ENCODE measurements at regions of chr17 and their contacts with region 1.

Region 1: DNA sequence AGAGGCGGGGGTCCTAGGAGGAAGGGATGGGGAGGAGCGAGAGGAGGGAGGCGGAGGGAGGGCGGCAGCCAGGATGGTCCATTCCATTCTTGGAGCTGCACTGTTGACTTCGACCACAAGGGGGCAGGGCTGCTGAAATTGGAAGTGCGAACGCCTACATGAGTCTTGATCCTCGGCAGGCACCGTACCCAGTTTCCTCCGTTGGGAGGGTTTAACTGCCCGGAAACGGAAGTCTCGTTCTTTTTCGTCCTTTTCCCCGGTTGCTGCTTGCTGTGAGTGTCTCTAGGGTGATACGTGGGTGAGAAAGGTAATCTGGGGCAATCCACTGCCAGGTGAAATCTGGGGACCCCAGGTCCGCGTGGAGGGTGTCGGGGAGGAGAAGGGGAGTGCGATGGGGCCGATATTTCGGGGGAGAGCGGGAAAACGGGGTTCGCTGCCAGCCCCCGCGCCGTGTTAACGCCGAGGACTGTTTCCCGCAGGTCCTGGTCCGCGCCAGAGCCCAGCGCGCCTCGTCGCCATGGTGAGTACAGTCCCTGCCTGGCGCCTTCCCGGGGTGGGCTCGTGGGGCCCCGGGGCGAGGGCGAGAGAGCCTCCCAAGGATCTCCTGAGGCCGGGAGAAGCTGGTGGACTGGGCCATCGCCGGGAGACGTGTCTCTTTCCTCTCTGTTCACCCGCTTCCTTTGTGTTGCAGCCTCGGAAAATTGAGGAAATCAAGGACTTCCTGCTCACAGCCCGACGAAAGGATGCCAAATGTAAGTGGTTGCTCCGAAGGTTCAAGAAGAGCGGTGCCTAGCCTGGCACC is at the start of gene RPL38:
- DNase-seq: peak; percentile 93 to 96 (median 95)
- H3K4me3 ChIP-seq: peak within 1 kb of the TSS; percentile 82 to 85 (median 84)
- H3K4me3 Mint-ChIP-seq: peak within 1 kb of the TSS; percentile 99
- H3K27ac ChIP-seq: peak within 1 kb of the TSS; percentile 76 to 90
- H3K27ac Mint-ChIP-seq: peak within 1 kb of the TSS; percentile 89 to 98 (median 94)
- H3K4me1 ChIP-seq: peaks cover 20 to 23% of the 10 kb centered on the region in 2 donors
- H3K4me1 Mint-ChIP-seq: peaks cover 42% of the 10 kb centered on the region
- H3K27me3 ChIP-seq: peaks cover 0 to 14% of the 10 kb centered on the region in 2 donors
- H3K27me3 Mint-ChIP-seq: peaks cover 5 to 29% (median 18%) of the 10 kb centered on the region in 3 donors
- CTCF ChIP-seq: peak; percentile 90
- polyA plus RNA-seq, gene RPL38: 379 to 1,070 (median 919) TPM

Region 2: GRCh38 chr17:74152591-74153455 is 50.8 kb before region 1 on chr17:
- intact Hi-C with region 1: no loop called
- DNase-seq: no peak
- H3K4me3 ChIP-seq: no peak overlapping the region
- H3K4me3 Mint-ChIP-seq: no peak overlapping the region
- H3K27ac ChIP-seq: no peak overlapping the region
- H3K27ac Mint-ChIP-seq: no peak overlapping the region
- H3K4me1 ChIP-seq: no peaks in the 10 kb centered on the region
- H3K4me1 Mint-ChIP-seq: no peaks in the 10 kb centered on the region
- H3K27me3 ChIP-seq: no peaks in the 10 kb centered on the region
- H3K27me3 Mint-ChIP-seq: peaks cover 14 to 22% (median 17%) of the 10 kb centered on the region in 3 donors
- CTCF ChIP-seq: no peak

Region 3: DNA sequence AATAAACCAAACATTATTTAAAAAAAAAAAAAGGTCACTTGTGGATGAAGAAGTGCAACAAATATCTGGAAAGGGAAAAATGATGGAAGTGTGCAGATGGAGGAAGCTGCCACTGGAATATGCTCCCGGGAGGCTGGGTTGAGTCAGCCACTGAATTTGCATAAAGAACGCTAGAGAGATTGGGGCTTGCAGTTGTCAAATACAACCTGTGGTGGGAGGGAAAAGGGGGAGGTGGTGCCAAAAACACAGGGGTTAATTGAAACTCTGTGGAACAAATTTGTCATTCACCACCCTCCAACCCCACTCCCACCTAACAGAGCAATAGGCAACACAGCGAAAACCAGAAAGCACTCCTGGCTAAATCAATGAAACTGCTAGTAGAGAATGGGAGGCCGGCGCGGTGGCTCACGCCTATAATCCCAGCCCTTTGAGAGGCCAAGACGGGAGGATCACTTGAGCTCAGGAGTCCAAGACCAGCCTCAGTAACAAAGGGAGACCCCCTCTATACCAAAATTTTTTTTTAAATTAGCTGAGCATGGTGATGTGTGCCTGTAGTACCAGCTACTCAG is 37.8 kb before region 1 on chr17:
- intact Hi-C with region 1: no loop called
- DNase-seq: no peak
- H3K4me3 ChIP-seq: no peak overlapping the region
- H3K4me3 Mint-ChIP-seq: peak overlapping the region in 1 of 2 donors; percentile 4
- H3K27ac ChIP-seq: no peak overlapping the region
- H3K27ac Mint-ChIP-seq: no peak overlapping the region
- H3K4me1 ChIP-seq: peaks cover 8 to 9% of the 10 kb centered on the region in 2 donors
- H3K4me1 Mint-ChIP-seq: no peaks in the 10 kb centered on the region
- H3K27me3 ChIP-seq: peaks cover 0 to 2% of the 10 kb centered on the region in 2 donors
- H3K27me3 Mint-ChIP-seq: peaks cover 3 to 10% (median 5%) of the 10 kb centered on the region in 3 donors
- CTCF ChIP-seq: no peak

Region 4: DNA sequence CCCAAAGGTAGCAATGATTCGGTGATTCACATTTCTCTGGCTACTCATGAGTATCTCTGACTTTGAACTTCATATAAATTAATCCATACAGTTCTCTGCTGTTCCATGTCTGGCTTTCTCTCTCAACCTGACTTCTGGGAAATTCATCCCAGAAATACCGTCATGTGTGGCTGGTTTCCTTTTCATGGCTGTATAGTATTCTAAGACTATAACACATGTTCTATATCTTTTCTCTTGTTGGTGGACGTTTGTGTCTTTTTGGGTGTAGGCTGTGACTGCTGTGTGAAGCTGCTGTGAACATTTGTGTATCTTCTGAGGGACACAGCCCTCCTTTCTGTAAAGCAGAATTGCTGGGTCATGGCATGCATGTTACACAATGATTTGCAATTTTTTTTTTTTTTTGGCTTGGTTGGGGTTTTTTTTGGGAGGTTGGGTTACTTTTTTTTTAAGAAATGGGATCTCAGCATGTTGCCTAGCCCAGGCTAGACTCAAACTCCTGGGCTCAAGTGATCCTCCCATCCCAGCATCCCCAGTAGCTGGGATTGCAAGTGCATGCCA is 16.0 kb after region 1 on chr17:
- intact Hi-C with region 1: no loop called
- DNase-seq: peak in 2 of 3 donors; percentile 32 to 39
- H3K4me3 ChIP-seq: peak overlapping the region in 1 of 3 experiments; percentile 11
- H3K4me3 Mint-ChIP-seq: peak overlapping the region in 1 of 2 donors; percentile 43
- H3K27ac ChIP-seq: peak overlapping the region in 1 of 2 donors; percentile 42
- H3K27ac Mint-ChIP-seq: peak overlapping the region; percentile 23 to 81 (median 55)
- H3K4me1 ChIP-seq: peaks cover 38 to 48% of the 10 kb centered on the region in 2 donors
- H3K4me1 Mint-ChIP-seq: peaks cover 52% of the 10 kb centered on the region
- H3K27me3 ChIP-seq: no peaks in the 10 kb centered on the region
- H3K27me3 Mint-ChIP-seq: peaks cover 0 to 2% (median 2%) of the 10 kb centered on the region in 3 donors
- CTCF ChIP-seq: no peak

Region 5: DNA sequence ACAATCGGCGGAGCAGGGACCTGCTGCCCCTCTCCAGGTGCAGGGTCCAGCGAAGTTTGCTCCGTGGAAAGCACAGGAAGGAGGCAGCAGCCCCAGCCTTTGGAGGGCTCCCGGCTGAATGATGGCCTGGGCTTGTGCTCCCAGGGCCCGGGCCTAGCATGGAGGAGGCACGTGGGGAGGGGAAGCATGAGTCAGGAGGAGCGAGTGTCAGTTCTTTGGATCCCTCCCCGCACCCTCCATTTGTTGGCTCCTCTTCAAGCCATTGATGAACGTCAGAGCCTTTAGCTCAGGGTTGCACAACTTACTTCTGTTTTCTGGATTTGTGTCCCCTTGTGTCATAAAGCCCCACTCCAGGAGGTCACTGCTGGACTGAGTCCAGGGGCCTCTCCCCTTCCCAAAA is 35.5 kb after region 1 on chr17:
- intact Hi-C with region 1: loop called in 1 of 2 experiments (anchors 5 kb)
- DNase-seq: peak; percentile 80 to 94 (median 86)
- H3K4me3 ChIP-seq: peak overlapping the region in 1 of 3 experiments; percentile 11
- H3K4me3 Mint-ChIP-seq: no peak overlapping the region
- H3K27ac ChIP-seq: peak overlapping the region; percentile 49 to 76
- H3K27ac Mint-ChIP-seq: peak overlapping the region; percentile 75 to 93 (median 87)
- H3K4me1 ChIP-seq: peaks cover 45 to 52% of the 10 kb centered on the region in 2 donors
- H3K4me1 Mint-ChIP-seq: peaks cover 40% of the 10 kb centered on the region
- H3K27me3 ChIP-seq: no peaks in the 10 kb centered on the region
- H3K27me3 Mint-ChIP-seq: peaks cover 0 to 2% (median 0%) of the 10 kb centered on the region in 3 donors
- CTCF ChIP-seq: no peak

Region 6: DNA sequence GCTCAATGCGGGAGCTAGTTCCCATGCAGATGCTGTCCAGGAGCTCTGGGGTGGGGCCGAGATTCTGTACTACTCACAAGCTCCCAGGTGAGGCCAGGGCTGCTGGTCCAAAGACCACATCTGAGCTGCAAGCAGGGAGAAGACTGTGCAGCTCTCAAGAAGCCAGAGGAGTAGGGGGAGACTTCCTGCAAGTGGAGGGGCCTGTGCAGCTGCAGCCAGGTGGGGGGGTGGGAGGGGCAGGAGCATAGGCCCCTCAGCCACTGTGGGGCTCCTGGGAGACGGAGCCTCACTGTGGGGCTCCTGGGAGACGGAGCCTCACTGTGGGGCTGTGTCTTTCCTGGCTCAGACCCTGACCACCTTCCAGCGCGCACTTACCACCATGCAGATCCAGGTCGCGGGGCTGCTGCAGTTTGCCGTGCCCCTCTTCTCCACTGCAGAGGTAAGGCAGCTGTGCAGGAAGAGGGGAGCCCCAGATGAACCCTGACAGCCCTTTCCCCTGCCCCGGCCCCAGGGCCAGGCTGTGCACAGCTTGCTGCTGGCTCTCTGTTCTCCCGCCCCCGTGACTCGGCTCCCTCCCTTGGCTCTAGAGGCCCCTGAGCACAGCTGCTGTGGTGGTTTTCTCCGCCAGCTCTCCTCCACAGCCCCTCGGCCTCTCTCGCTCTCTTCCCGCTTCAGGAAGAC is 46.1 kb after region 1 on chr17:
- intact Hi-C with region 1: no loop called
- DNase-seq: no peak
- H3K4me3 ChIP-seq: no peak overlapping the region
- H3K4me3 Mint-ChIP-seq: no peak overlapping the region
- H3K27ac ChIP-seq: no peak overlapping the region
- H3K27ac Mint-ChIP-seq: peak overlapping the region in 3 of 7 donors; percentile 18 to 78 (median 48)
- H3K4me1 ChIP-seq: peaks cover 8 to 13% of the 10 kb centered on the region in 2 donors
- H3K4me1 Mint-ChIP-seq: peaks cover 13% of the 10 kb centered on the region
- H3K27me3 ChIP-seq: no peaks in the 10 kb centered on the region
- H3K27me3 Mint-ChIP-seq: no peaks in the 10 kb centered on the region
- CTCF ChIP-seq: no peak

Measured in CD14-positive monocyte (primary cell).